Naive thymus-derived CD4-positive, alpha-beta T cell (primary cell): ENCODE measurements at regions of chr6 and their contacts with region 1.

Region 1: GRCh38 chr6:170306324-170307079 is at the start of gene FAM120B:
- DNase-seq: peak; percentile 90 to 95 (median 94)
- ATAC-seq: peak; percentile 97
- H3K4me3 ChIP-seq: peak within 1 kb of the TSS; percentile 84
- H3K4me3 Mint-ChIP-seq: peak within 1 kb of the TSS; percentile 88 to 98 (median 96)
- H3K27ac ChIP-seq: peak within 1 kb of the TSS; percentile 87
- H3K27ac Mint-ChIP-seq: peak within 1 kb of the TSS; percentile 92 to 98 (median 95)
- H3K4me1 ChIP-seq: peaks cover 28 to 43% of the 10 kb centered on the region in 2 donors
- H3K4me1 Mint-ChIP-seq: peaks cover 35 to 49% (median 43%) of the 10 kb centered on the region in 7 donors
- H3K27me3 ChIP-seq: no peaks in the 10 kb centered on the region
- H3K27me3 Mint-ChIP-seq: peaks cover 5 to 37% (median 11%) of the 10 kb centered on the region in 5 donors
- total RNA-seq, gene FAM120B: 27.2 to 53.4 (median 35.5) TPM

Region 2: DNA sequence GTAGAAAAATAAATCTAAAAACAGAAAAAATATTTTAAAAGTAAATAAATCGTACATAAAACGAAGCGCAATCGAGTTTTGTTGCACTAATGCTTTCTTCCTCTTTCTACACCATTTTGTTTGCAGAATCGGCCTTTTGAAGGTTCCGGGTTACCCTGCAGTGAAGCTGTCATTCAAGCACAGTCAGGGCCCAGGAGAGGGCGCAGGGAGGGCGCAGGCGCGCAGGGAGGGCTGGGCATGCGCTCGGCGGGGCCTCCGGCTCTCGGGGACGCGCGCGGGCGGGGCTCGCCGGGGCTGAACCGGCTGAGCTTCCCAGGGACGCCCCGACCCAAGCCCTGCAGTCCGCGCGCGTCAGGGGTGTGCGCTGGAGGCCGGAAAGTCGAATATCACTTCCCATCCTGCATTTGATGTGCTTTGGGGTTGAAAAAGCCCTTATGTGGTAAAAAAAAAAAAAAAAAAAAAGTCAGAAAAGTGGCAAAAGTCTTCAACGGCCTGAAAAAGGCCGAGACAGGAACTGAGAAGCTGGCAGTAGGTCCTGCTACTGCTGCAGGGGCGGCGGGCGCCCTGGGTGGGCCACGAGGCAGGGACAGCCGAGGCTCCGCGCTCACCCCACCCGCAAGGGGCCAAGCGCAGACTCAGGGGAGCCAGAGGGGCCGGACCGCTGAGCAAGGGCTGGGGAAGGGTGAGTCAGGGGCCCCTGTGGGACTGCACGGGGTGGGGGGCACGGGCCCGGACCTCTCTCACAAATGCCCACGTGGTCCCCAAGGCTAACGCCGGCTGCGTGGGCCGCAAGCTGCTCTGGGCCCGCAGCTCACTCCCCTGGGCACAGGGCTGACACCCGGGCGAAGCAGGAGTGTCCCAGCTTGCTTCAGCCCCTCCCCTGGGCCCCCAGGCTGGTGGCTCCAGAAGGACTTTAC is 1093.3 kb before region 1 on chr6:
- CTCF ChIA-PET with region 1: no interaction called
- POLR2A ChIA-PET with region 1: no interaction called
- intact Hi-C with region 1: loop called in 1 of 2 experiments (anchors 1 kb)
- DNase-seq: peak; percentile 82 to 94 (median 91)
- ATAC-seq: peak; percentile 99
- H3K4me3 ChIP-seq: peak overlapping the region; percentile 13
- H3K4me3 Mint-ChIP-seq: peak overlapping the region; percentile 53 to 82 (median 68)
- H3K27ac ChIP-seq: peak overlapping the region; percentile 56
- H3K27ac Mint-ChIP-seq: peak overlapping the region; percentile 53 to 90 (median 81)
- H3K4me1 ChIP-seq: peaks cover 4 to 8% of the 10 kb centered on the region in 2 donors
- H3K4me1 Mint-ChIP-seq: peaks cover 0 to 30% (median 16%) of the 10 kb centered on the region in 7 donors
- H3K27me3 ChIP-seq: no peaks in the 10 kb centered on the region
- H3K27me3 Mint-ChIP-seq: peaks cover 0 to 4% (median 0%) of the 10 kb centered on the region in 5 donors

Region 3: GRCh38 chr6:169723200-169723909 is 583.1 kb before region 1 on chr6:
- CTCF ChIA-PET with region 1: no interaction called
- POLR2A ChIA-PET with region 1: no interaction called
- intact Hi-C with region 1: loop called in 1 of 2 experiments (anchors 2 kb)
- DNase-seq: peak; percentile 59 to 86 (median 79)
- ATAC-seq: peak; percentile 49
- H3K4me3 ChIP-seq: peak overlapping the region; percentile 71
- H3K4me3 Mint-ChIP-seq: peak overlapping the region; percentile 87 to 97 (median 92)
- H3K27ac ChIP-seq: peak overlapping the region; percentile 95
- H3K27ac Mint-ChIP-seq: peak overlapping the region; percentile 95 to 98 (median 97)
- H3K4me1 ChIP-seq: peaks cover 13 to 26% of the 10 kb centered on the region in 2 donors
- H3K4me1 Mint-ChIP-seq: peaks cover 18 to 67% (median 55%) of the 10 kb centered on the region in 7 donors
- H3K27me3 ChIP-seq: no peaks in the 10 kb centered on the region
- H3K27me3 Mint-ChIP-seq: peaks cover 0 to 8% (median 0%) of the 10 kb centered on the region in 5 donors

Region 4: GRCh38 chr6:170067181-170067641 is 239.3 kb before region 1 on chr6:
- CTCF ChIA-PET with region 1: no interaction called
- POLR2A ChIA-PET with region 1: no interaction called
- intact Hi-C with region 1: no loop called
- DNase-seq: peak in 1 of 9 donors; percentile 12
- ATAC-seq: no peak
- H3K4me3 ChIP-seq: no peak overlapping the region
- H3K4me3 Mint-ChIP-seq: no peak overlapping the region
- H3K27ac ChIP-seq: no peak overlapping the region
- H3K27ac Mint-ChIP-seq: no peak overlapping the region
- H3K4me1 ChIP-seq: no peaks in the 10 kb centered on the region
- H3K4me1 Mint-ChIP-seq: peaks cover 0 to 3% (median 0%) of the 10 kb centered on the region in 7 donors
- H3K27me3 ChIP-seq: no peaks in the 10 kb centered on the region
- H3K27me3 Mint-ChIP-seq: peaks cover 4 to 26% (median 7%) of the 10 kb centered on the region in 5 donors

Region 5: GRCh38 chr6:170087941-170088581 is 218.4 kb before region 1 on chr6:
- CTCF ChIA-PET with region 1: no interaction called
- POLR2A ChIA-PET with region 1: interaction called, 5 read pairs
- intact Hi-C with region 1: loop called in 1 of 2 experiments (anchors 1 kb)
- DNase-seq: peak in 8 of 9 donors; percentile 19 to 51 (median 46)
- ATAC-seq: peak; percentile 71
- H3K4me3 ChIP-seq: peak overlapping the region; percentile 68
- H3K4me3 Mint-ChIP-seq: peak overlapping the region; percentile 87 to 99 (median 92)
- H3K27ac ChIP-seq: peak overlapping the region; percentile 68
- H3K27ac Mint-ChIP-seq: peak overlapping the region; percentile 90 to 98 (median 95)
- H3K4me1 ChIP-seq: peaks cover 23 to 26% of the 10 kb centered on the region in 2 donors
- H3K4me1 Mint-ChIP-seq: peaks cover 30 to 47% (median 37%) of the 10 kb centered on the region in 7 donors
- H3K27me3 ChIP-seq: no peaks in the 10 kb centered on the region
- H3K27me3 Mint-ChIP-seq: no peaks in the 10 kb centered on the region

Region 6: DNA sequence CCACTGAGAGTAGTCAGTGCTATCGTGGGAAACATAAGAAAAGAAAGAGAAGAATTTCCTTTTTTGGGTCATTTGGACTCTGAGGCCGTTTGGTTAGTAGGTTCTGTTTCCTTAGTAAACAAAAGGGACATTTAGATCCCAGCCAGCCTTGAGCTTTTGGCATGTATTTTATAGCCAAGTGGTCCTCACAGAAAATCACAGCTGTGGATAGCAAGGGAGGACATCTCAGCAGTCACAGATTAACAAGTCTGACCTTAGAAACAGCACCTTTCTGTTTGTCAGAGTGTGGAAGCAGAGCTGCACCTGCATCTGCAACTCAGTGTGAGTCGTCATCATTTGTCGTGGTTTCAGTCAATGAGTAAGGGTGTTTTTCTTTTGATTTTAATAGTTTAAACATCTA is 40.6 kb after region 1 on chr6:
- CTCF ChIA-PET with region 1: no interaction called
- POLR2A ChIA-PET with region 1: interaction called, 3 read pairs
- intact Hi-C with region 1: loop called in 1 of 2 experiments (anchors 2 kb)
- DNase-seq: no peak
- ATAC-seq: no peak
- H3K4me3 ChIP-seq: no peak overlapping the region
- H3K4me3 Mint-ChIP-seq: peak overlapping the region in 1 of 10 donors; percentile 73
- H3K27ac ChIP-seq: no peak overlapping the region
- H3K27ac Mint-ChIP-seq: peak overlapping the region in 1 of 9 donors; percentile 74
- H3K4me1 ChIP-seq: no peaks in the 10 kb centered on the region
- H3K4me1 Mint-ChIP-seq: peaks cover 5 to 43% (median 14%) of the 10 kb centered on the region in 7 donors
- H3K27me3 ChIP-seq: no peaks in the 10 kb centered on the region
- H3K27me3 Mint-ChIP-seq: no peaks in the 10 kb centered on the region

Region 7: GRCh38 chr6:170584181-170584953 is 277.9 kb after region 1 on chr6 and contains the start of gene PDCD2:
- CTCF ChIA-PET with region 1: no interaction called
- POLR2A ChIA-PET with region 1: interaction called, 4 read pairs
- intact Hi-C with region 1: loop called (anchors 1 kb)
- DNase-seq: peak; percentile 82 to 92 (median 91)
- ATAC-seq: peak; percentile 96
- H3K4me3 ChIP-seq: peak within 1 kb of the TSS; percentile 89
- H3K4me3 Mint-ChIP-seq: peak within 1 kb of the TSS; percentile 96 to 100 (median 97)
- H3K27ac ChIP-seq: peak within 1 kb of the TSS; percentile 88
- H3K27ac Mint-ChIP-seq: peak within 1 kb of the TSS; percentile 94 to 99 (median 96)
- H3K4me1 ChIP-seq: peaks cover 8 to 11% of the 10 kb centered on the region in 2 donors
- H3K4me1 Mint-ChIP-seq: peaks cover 14 to 42% (median 37%) of the 10 kb centered on the region in 7 donors
- H3K27me3 ChIP-seq: no peaks in the 10 kb centered on the region
- H3K27me3 Mint-ChIP-seq: peaks cover 0 to 4% (median 0%) of the 10 kb centered on the region in 5 donors
- total RNA-seq, gene PDCD2: 49.4 to 80.1 (median 76.1) TPM